MCF 10A (cell line): ENCODE measurements at regions of chr11 and their contacts with region 1.

Region 1: GRCh38 chr11:57345555-57346211 is 7.5 kb downstream of the P2RX3 start:
- DNase-seq: peak; percentile 85
- H3K4me3 Mint-ChIP-seq: no peak overlapping the region
- H3K27ac Mint-ChIP-seq: no peak overlapping the region
- H3K4me1 Mint-ChIP-seq: no peaks in the 10 kb centered on the region
- H3K27me3 Mint-ChIP-seq: no peaks in the 10 kb centered on the region
- CTCF ChIP-seq: peak; percentile 90

Region 2: GRCh38 chr11:57358543-57358961 is 12.9 kb after region 1 on chr11:
- CTCF ChIA-PET with region 1: interaction called, 84 read pairs
- POLR2A ChIA-PET with region 1: no interaction called
- intact Hi-C with region 1: no loop called
- DNase-seq: no peak
- H3K4me3 Mint-ChIP-seq: no peak overlapping the region
- H3K27ac Mint-ChIP-seq: no peak overlapping the region
- H3K4me1 Mint-ChIP-seq: no peaks in the 10 kb centered on the region
- H3K27me3 Mint-ChIP-seq: no peaks in the 10 kb centered on the region
- CTCF ChIP-seq: no peak

Region 3: DNA sequence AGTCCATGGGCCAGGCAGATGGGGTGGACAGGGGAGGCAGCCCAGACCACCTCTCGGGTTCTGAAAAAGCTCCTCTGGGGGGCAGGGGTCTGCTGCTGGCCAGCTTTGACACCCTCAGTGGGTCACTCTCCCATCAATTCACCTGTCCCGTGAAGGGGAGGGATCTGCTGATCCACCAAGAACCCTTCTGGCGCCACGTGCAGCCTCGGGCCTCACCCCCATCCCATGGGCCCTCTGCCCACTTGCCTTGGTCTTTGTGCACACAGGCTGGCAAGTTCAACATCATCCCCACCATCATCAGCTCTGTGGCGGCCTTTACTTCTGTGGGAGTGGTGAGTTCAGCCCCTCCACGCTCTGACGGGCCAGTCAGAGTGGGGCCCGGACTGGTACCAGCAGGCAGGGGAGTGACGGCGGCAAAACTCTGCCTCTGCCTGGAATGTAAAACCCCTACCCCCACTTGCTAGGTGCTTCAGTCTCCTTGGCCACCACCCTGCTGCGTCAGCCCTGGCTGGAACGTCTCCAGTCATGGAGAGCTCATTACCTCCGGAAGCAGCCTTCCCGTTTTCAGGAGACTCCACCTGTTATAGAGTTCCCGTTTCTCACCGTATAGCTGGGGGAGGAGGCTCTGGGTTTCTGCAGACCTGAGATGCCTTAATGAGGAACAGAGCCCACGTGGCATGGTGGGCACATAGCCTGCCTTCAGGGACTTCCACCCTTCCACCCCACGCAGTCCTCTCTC is 22.6 kb after region 1 on chr11:
- CTCF ChIA-PET with region 1: interaction called, 84 read pairs
- POLR2A ChIA-PET with region 1: no interaction called
- intact Hi-C with region 1: no loop called
- DNase-seq: peak; percentile 60
- H3K4me3 Mint-ChIP-seq: no peak overlapping the region
- H3K27ac Mint-ChIP-seq: no peak overlapping the region
- H3K4me1 Mint-ChIP-seq: peaks cover 13% of the 10 kb centered on the region
- H3K27me3 Mint-ChIP-seq: no peaks in the 10 kb centered on the region
- CTCF ChIP-seq: no peak

Region 4: DNA sequence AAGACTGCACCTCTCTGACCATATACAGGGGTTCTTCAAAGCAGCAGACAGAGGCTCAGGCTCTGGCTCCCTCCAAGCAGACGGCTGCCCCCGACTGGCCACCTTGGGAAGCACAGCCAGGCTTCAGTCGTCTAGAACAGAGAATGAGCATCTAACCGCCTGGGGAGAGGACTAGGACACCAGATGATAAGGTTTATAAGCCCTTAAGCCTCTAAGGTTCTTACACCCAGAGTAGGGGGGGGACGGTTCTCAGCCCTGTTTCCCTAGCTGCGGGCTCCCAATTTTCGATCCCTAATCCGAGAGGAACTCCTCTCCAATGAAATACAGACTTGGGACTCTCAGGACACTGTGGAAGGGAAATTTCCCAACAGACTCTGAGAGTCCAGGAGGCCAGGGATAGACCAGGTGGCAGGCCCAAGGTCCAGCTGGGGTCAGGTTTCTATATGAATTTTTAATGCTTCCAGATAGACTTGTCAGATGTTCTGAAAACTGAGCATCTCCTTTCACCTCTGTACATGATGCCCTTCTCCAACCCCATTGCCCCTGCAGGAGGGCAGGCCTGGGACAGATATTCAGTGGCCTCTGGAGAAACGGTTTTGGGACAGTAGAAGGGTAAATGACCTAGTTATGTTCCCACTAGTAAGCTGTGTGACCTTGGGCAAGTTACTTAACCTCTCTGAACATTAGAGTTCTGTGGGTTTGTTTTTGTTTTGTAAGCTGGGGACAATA is 134.9 kb after region 1 on chr11:
- CTCF ChIA-PET with region 1: interaction called, 3 read pairs
- POLR2A ChIA-PET with region 1: no interaction called
- intact Hi-C with region 1: loop called (anchors 2 kb)
- DNase-seq: peak; percentile 68
- H3K4me3 Mint-ChIP-seq: no peak overlapping the region
- H3K27ac Mint-ChIP-seq: no peak overlapping the region
- H3K4me1 Mint-ChIP-seq: peaks cover 2% of the 10 kb centered on the region
- H3K27me3 Mint-ChIP-seq: peaks cover 24% of the 10 kb centered on the region
- CTCF ChIP-seq: peak; percentile 72

Region 5: DNA sequence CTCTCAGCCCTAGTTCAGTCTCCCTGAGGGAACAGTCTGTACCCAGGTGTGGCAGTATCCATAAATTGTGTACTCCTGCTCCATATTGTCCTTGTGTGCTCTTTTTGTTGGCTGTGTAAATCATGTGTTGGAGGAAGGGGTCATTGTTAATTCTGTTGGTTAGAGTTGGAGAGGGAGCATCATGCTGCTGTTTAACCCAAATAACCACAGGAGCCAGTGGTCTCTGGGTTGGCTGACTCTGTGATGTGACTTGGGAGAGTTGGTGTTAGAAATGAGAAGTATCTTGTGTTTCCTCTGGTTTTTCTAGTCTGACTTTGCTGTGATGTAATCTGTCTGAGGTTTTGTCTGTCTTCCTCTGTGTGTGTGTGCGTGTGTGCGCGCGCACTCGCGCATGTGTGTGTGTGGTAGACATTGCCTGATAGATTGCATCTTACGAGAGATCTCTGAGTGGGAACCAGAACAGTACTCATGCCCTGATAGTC is 446.4 kb after region 1 on chr11:
- CTCF ChIA-PET with region 1: no interaction called
- POLR2A ChIA-PET with region 1: no interaction called
- intact Hi-C with region 1: no loop called
- DNase-seq: peak; percentile 49
- H3K4me3 Mint-ChIP-seq: peak overlapping the region; percentile 70
- H3K27ac Mint-ChIP-seq: peak overlapping the region; percentile 84
- H3K4me1 Mint-ChIP-seq: peaks cover 46% of the 10 kb centered on the region
- H3K27me3 Mint-ChIP-seq: no peaks in the 10 kb centered on the region
- CTCF ChIP-seq: no peak